Left cardiac atrium (tissue), 4 donors: ENCODE measurements at regions of chr1 and their contacts with region 1.

Region 1: GRCh38 chr1:234610348-234611152 is 572 bp upstream of the IRF2BP2 start:
- DNase-seq: peak; percentile 97
- ATAC-seq: peak; percentile 79 to 85

Region 2: DNA sequence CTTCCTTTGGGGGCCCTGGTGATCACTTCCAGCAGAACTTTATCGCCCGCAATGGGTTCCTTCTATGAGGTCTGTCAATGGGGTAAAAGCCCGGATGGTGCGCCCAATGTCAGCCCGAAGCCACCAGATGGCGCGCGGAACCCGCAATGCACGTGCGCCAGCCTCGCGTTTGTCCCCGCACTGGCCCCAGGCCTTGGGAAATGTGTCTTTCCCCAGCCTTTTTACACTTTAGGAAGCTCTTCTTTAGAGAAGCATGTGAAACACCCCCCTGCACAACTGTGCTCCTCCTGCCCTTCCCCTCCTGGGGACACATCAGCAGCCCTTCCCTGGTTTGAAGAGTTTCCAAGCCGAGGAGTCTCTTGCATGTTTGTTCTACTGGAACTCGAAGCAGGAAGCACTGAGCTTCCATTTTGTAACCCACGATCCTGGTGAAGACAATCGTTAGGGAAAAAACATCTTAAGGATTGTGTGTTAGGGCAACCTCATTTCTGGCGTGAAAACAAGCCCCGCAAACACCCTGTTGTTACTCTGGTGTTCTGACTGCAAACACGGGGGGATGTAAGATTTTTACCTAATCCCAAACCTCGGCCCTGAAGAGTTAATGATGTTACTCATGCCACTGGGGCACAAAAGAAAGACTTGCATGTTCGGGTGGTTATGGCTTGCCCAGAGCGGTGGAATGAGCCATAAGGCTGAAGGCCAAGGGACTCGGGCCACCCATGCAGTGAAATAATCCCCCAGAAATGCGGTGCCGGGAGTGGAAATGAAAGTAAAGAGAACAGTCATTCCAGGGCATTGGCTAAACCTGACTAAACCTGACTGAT is 111.2 kb before region 1 on chr1:
- intact Hi-C with region 1: loop called in 1 of 2 experiments (anchors 5 kb)
- DNase-seq: peak; percentile 92
- ATAC-seq: peak; percentile 95 to 96

Region 3: GRCh38 chr1:234683861-234684632 is 73.5 kb after region 1 on chr1:
- intact Hi-C with region 1: loop called in 1 of 2 experiments (anchors 5 kb)
- DNase-seq: peak; percentile 61
- ATAC-seq: peak; percentile 96 to 98

Region 4: DNA sequence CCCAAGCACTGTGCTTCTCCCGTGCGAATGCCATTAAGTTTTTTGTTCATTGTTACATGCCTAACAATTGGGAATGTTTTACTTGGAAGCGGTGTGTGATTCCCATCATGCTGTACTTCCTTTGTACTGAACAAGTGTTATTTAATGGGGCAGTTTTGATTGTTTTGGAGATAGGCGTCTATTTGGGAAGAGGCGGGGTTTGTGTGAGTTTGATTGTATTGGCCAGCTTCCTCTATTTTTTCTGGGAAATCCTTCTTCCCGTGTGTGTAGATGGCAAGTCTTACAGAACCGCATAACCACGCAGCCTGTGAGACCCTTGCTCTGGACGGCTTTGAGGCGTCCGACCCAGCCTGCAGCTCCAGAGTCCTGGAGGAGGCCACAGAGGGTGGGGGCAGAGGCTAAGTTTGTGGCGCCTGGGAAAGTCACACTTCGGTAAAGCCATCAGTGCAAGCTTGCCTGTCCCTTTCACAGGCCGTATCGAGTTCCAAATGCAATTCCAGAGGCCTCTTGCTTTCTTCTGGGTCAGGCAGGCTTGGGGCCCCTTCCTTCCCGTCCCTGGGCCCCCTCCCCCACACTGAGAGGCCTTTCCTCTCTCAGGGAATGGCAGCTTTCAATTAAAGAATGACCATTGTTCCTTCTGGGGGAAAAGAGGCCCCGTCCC is 307.8 kb after region 1 on chr1:
- intact Hi-C with region 1: loop called in 1 of 2 experiments (anchors 10 kb)
- DNase-seq: peak; percentile 61
- ATAC-seq: peak; percentile 15 to 60

Region 5: DNA sequence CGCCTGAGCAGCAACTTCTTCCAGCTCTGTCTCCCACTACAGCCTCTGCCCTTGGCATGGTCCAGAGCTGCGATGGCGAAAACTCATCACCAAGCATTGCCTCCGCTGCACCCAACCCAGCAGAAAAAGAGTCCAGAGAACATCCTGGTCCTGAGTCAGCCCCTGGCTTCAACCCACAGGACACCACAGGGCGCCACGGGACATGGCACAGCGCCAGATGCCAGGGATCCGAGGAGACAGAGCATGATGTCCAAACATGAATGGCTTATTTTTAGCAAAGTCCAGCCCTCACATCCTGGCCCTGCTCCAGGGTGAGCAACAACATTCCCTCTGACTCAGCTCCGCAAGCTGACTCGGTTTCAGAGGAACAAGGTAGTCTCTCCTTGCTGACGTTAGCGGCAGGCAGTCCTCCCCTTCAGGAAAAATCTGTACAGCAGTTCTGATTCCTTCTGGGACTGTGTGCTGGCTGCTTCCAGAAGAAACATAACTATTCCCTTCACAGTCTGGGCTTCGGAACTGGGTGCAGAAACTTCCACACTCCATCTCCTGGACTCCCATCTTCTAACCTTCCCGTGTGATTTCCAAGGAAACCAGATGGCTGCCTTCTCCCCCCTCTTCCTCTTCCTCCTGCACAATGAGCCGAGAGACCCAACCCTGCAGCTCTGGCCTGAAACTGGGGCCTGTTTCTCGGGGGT is 386.8 kb after region 1 on chr1:
- intact Hi-C with region 1: loop called in 1 of 2 experiments (anchors 5 kb)
- DNase-seq: peak; percentile 99
- ATAC-seq: peak; percentile 95 to 96

Region 6: DNA sequence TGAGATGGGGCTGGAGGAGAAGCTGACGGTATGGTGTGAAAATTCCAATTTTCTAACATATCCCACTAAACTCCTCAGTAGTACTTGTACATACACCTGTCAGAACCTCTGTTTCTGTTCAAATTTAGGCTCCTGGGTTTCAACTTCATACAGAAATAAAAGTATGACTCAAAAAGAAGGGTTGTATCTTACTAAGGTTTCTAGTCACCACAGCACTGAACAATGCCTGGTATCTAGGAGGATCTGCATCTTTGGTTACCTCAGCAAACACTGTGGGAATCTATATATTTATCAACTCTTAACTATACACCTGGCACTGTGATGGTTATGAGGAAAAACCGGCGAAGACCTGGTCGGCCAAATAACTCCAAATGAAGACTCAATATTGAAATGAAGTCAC is 536.7 kb after region 1 on chr1:
- intact Hi-C with region 1: no loop called
- DNase-seq: no peak
- ATAC-seq: no peak